ENCODE measurements at regions of chr6 and their contacts with region 1.

Region 1: GRCh38 chr6:24283043-24283985 is 74.5 kb downstream of the DCDC2 start:
- DNase-seq: peak; percentile 61
- ATAC-seq: peak; percentile 99
- H3K4me3 ChIP-seq: no peak overlapping the region
- H3K27ac ChIP-seq: no peak overlapping the region
- H3K4me1 ChIP-seq: no peaks in the 10 kb centered on the region
- H3K27me3 ChIP-seq: no peaks in the 10 kb centered on the region
- CTCF ChIP-seq: peak; percentile 39
- POLR2A ChIP-seq: no peak
- RAD21 ChIP-seq: peak; percentile 47

Region 2: GRCh38 chr6:24157886-24158285 is 125.4 kb before region 1 on chr6:
- CTCF ChIA-PET with region 1: no interaction called
- POLR2A ChIA-PET with region 1: no interaction called
- dilution Hi-C with region 1: no loop called
- in situ Hi-C with region 1: no loop called
- intact Hi-C with region 1: no loop called
- DNase-seq: no peak
- ATAC-seq: no peak
- H3K4me3 ChIP-seq: no peak overlapping the region
- H3K27ac ChIP-seq: no peak overlapping the region
- H3K4me1 ChIP-seq: no peaks in the 10 kb centered on the region
- H3K27me3 ChIP-seq: no peaks in the 10 kb centered on the region
- CTCF ChIP-seq: no peak
- POLR2A ChIP-seq: no peak
- RAD21 ChIP-seq: no peak

Region 3: GRCh38 chr6:24359640-24360454 is 76.5 kb after region 1 on chr6:
- CTCF ChIA-PET with region 1: interaction called, 5 read pairs
- POLR2A ChIA-PET with region 1: interaction called, 4 read pairs
- dilution Hi-C with region 1: no loop called
- in situ Hi-C with region 1: no loop called
- intact Hi-C with region 1: loop called (anchors 1 kb)
- DNase-seq: peak; percentile 65
- ATAC-seq: peak; percentile 90
- H3K4me3 ChIP-seq: peak overlapping the region; percentile 43
- H3K27ac ChIP-seq: no peak overlapping the region
- H3K4me1 ChIP-seq: peaks cover 4% of the 10 kb centered on the region; the same call in 1 of the 2 replicates
- H3K27me3 ChIP-seq: peaks cover 18% of the 10 kb centered on the region
- CTCF ChIP-seq: peak; percentile 65
- POLR2A ChIP-seq: no peak
- RAD21 ChIP-seq: peak; percentile 23; the same call in 1 of the 2 replicates

Region 4: DNA sequence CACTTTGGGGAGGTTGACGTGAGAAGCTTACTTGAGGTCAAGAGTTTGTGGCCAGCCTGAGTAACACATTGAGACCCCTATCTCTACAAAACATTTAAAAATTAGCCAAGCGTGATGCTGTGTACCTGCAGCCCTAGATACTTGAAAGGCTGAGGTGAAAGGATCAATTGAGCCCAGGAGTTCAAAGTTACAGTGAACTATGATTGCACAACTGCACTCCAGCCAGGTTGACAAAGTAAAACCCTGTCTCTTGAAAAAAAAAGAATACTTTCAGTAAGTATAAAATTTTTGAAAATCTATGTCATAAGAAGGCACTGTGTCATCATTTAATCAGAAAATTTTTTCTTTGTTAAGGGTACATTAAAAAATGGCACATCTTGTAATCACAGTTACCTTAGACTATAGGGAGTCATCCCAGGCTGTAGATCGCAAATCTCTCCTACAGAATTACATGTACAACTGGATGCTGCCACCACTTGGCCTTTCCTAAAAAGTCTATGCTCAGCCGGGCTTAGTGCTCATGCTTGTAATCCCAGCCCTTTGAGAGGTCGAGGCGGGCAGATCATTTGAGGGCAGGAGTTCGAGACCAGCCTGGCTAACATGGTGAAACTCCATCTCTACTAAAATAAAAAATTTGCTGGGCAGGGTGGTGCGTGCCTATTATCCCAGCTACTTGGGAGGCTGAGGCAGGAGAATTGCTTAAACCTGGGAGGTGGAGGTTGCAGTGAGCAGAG is 102.4 kb after region 1 on chr6:
- CTCF ChIA-PET with region 1: interaction called, 21 read pairs
- POLR2A ChIA-PET with region 1: no interaction called
- dilution Hi-C with region 1: no loop called
- in situ Hi-C with region 1: no loop called
- intact Hi-C with region 1: loop called (anchors 1 kb)
- DNase-seq: no peak
- ATAC-seq: no peak
- H3K4me3 ChIP-seq: no peak overlapping the region
- H3K27ac ChIP-seq: no peak overlapping the region
- H3K4me1 ChIP-seq: no peaks in the 10 kb centered on the region
- H3K27me3 ChIP-seq: no peaks in the 10 kb centered on the region
- CTCF ChIP-seq: no peak
- POLR2A ChIP-seq: no peak
- RAD21 ChIP-seq: no peak

Region 5: GRCh38 chr6:24391756-24392405 is 108.6 kb after region 1 on chr6:
- CTCF ChIA-PET with region 1: interaction called, 21 read pairs
- POLR2A ChIA-PET with region 1: no interaction called
- dilution Hi-C with region 1: no loop called
- in situ Hi-C with region 1: no loop called
- intact Hi-C with region 1: loop called (anchors 1 kb)
- DNase-seq: no peak
- ATAC-seq: no peak
- H3K4me3 ChIP-seq: no peak overlapping the region
- H3K27ac ChIP-seq: no peak overlapping the region
- H3K4me1 ChIP-seq: peaks cover 5% of the 10 kb centered on the region
- H3K27me3 ChIP-seq: no peaks in the 10 kb centered on the region
- CTCF ChIP-seq: no peak
- POLR2A ChIP-seq: no peak
- RAD21 ChIP-seq: no peak

Region 6: GRCh38 chr6:24689964-24690363 is 406.6 kb after region 1 on chr6:
- CTCF ChIA-PET with region 1: no interaction called
- POLR2A ChIA-PET with region 1: no interaction called
- dilution Hi-C with region 1: no loop called
- in situ Hi-C with region 1: no loop called
- intact Hi-C with region 1: loop called (anchors 10 kb)
- DNase-seq: no peak
- ATAC-seq: peak; percentile 46; the same call in 1 of the 2 replicates
- H3K4me3 ChIP-seq: no peak overlapping the region
- H3K27ac ChIP-seq: no peak overlapping the region
- H3K4me1 ChIP-seq: no peaks in the 10 kb centered on the region
- H3K27me3 ChIP-seq: no peaks in the 10 kb centered on the region
- CTCF ChIP-seq: no peak
- POLR2A ChIP-seq: no peak
- RAD21 ChIP-seq: no peak

Region 7: DNA sequence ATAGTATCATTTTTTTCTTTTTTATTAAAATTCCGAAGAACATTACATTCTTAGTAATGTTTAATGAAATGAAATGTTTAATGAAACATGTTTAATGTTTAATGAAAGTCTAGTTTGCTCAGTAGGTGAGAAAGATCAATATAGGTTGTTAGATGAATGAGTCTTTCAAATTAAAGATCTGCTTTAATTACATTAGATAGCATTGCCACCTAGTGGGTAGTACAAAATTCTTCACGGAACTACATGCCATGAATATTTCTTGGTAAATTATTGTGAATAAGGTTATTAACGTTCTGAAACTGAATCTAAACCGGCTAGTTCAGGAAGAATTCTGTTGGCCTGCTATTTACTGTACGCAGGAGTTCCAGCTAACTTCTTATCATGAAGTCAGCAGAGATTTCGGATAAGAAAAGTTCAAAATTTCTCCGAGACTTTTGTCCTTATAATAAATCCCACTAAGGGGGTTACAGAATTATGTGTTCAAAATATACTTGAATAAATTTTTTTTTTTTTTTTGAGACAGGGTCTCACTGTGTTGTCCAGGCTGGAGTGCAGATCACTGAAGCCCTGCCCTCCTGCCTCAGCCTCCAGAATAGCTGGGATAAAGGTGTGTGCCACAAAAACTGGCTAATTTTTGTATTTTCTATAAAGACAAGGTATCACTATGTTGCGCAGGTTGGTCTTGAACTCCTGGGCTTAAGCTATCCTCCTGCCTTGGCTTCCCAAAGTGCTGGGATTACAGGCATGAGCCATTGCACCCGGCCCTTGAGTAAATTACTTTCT is 483.6 kb after region 1 on chr6:
- CTCF ChIA-PET with region 1: no interaction called
- POLR2A ChIA-PET with region 1: no interaction called
- dilution Hi-C with region 1: no loop called
- in situ Hi-C with region 1: no loop called
- intact Hi-C with region 1: loop called (anchors 10 kb)
- DNase-seq: peak; percentile 49
- ATAC-seq: peak; percentile 75
- H3K4me3 ChIP-seq: no peak overlapping the region
- H3K27ac ChIP-seq: no peak overlapping the region
- H3K4me1 ChIP-seq: peaks cover 2% of the 10 kb centered on the region; the same call in 1 of the 2 replicates
- H3K27me3 ChIP-seq: no peaks in the 10 kb centered on the region
- CTCF ChIP-seq: peak; percentile 68
- POLR2A ChIP-seq: no peak
- RAD21 ChIP-seq: peak; percentile 73